ENCODE measurements at regions of chr11 and their contacts with region 1.

Region 1: DNA sequence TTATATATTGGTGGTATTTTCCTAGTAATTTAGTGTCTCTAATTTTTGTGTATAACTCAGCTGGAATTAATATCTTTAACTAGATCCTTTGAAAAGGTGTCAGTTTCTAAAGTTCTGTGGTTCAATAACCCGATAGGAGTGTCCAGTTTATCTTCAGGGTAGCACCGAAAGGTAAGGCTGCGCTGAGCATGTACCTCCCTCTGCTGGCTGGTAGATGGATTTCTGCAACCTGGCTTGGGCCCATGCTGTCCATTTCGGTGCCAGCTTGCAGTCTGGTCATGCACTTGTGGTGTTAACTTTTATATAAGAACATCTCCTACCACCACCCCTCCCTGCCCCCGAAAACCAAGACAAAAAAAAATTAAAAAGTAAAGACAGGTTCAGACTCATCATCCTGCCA is 24.7 kb downstream of the EXT2 start:
- DNase-seq: no peak
- H3K4me3 ChIP-seq: no peak overlapping the region
- CTCF ChIP-seq: peak; percentile 20

Region 2: GRCh38 chr11:44104481-44105294 is 15.5 kb before region 1 on chr11:
- CTCF ChIA-PET with region 1: interaction called, 19 read pairs
- POLR2A ChIA-PET with region 1: no interaction called
- DNase-seq: no peak
- H3K4me3 ChIP-seq: no peak overlapping the region
- CTCF ChIP-seq: no peak